ENCODE measurements at regions of chr14 and their contacts with region 1.

Region 1: DNA sequence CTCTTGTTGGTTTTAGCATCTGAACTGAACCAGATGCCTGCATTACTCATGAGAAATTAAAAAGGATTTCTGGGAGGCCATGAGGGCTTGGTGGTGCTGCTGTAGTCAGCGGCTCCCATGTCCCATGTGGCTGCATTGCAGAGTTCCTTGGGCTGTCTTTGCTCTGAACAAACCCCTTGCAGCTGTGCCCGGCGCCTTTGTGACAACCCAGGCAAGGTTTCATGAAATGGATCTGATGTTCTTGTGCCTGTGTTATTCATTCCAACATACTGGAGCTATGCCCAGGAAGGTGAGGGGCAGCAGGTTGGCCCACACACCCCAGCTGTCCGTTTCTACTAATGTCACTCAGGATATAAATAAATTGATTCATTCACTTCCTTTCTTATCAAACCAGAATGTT is 40.8 kb downstream of the TGFB3 start:
- DNase-seq: no peak

Region 2: DNA sequence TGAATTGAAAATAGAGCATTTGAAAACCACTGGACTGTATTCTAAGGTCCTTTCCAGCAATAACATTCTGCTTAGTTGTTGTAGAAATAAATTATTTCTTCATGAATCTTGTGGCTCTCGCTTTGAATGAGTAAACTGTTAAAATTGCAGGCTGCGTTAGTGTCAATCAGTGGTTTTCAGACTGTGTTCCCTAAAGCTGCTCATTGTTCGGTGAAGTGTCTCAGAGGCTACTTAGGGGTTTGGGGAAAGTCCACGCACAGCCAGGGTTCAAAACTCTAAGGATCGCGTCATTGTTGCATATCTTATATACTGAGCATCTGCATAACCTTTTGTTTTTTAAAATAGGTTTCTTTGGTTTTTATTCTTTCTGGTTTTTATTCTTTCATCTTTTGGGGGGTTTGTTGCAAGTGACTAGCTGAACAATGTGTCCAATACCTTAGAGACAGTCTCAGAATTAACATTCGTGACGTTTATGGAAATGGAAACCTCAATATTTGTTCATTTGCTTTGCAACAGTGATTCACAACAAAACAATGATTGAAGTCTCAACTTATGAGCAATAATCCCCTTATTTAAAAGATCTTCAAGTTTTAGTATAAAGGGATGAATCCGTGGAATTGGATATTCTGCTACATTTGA is 171.9 kb before region 1 on chr14:
- intact Hi-C with region 1: no loop called
- DNase-seq: no peak

Region 3: DNA sequence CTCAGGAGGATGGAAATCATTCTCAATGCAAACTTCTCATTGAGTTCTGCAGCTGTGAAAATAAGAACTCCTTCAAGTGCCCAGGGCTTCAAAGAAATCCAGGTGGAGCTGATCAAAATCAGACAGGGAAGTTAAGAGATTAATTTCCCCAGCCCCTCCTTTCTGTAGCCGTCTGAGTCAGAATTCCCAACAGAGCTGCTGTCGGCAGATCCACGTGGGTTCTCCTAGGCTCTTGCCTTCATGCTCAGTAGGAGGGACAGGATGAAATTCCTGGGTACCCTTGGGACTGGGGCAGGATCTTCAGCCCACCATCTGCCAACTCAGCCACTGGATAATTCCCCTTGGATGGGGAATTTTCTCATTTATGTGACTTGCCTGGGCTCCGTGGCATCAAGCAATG is 27.4 kb after region 1 on chr14:
- intact Hi-C with region 1: loop called (anchors 2 kb)
- DNase-seq: no peak

Region 4: DNA sequence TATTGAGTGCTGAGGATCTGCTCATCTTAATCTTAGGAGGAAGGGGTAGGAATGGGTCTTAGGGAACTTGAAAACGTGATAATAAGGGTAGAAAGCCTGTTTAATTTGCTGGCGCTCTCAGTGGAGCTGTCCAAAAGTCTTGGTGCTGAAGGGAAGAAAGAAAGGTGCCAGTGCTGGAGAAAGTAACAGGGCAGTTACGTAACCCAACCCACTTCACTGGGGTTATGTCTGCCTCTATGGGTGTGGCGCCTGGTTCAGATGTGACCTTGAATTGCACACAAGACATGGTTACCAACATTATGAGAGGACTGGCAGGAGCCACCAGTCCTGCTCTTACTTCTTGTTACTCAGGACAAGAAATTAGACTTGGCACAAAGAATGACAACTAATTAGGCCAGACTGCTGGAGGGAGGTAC is 192.1 kb after region 1 on chr14:
- intact Hi-C with region 1: no loop called
- DNase-seq: no peak